ENCODE measurements at regions of chr6 and their contacts with region 1.

Region 1: DNA sequence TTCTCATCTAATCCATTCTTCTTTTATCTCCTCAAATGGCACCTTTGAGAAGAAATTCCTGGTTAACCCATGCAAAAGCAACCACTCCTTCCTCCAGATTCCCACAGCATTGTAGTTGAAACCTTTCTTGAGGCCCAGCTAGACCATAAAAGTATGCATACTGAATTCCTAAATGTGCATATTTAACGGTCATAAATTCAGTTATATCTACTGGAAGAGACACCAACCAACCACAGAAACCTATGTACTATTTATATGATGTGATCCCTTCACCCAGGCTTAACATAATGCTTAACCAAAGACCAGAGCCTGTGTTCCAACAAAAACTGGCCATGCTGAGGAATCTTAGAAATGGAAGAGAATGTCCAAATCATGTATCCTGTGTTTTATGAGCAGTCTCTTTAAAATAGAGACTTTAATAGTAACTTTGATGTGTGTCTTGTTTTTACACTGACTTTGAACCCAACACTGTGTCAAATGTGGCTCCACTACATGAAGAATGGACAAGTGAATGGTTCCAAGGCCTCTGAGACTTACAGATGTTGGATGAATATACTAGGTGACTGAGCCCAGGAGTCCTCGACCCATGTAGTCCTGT is 11.4 kb upstream of the TAF8 start:
- DNase-seq: no peak
- ATAC-seq: no peak
- H3K4me3 Mint-ChIP-seq: peak overlapping the region; percentile 88
- H3K27ac Mint-ChIP-seq: peak overlapping the region; percentile 100
- H3K4me1 Mint-ChIP-seq: peaks cover 78% of the 10 kb centered on the region
- H3K27me3 Mint-ChIP-seq: no peaks in the 10 kb centered on the region

Region 2: DNA sequence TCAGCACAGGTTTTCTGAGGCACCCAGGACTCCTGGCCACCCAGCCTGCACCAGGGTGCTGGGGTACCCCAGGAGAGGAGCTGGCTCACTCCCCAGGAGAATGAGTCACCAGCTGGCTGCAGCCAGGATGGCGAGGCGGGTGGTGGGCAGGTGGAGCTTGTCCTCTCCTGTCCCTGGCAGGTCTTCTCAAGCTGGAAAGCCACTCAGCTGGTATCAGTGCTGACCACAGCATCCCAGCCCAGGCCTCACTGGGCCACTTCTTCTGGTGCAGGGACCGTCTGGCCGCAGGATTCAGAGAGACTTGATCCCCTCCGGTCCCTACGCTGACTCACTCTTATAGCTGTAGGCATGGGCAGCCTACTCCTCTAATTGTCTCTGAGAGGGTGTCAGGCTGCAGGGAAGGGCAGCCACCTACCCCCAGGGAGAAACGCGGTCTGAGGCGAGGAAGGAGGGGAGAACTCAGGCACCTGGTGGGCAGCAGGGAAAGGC is 325.7 kb before region 1 on chr6:
- CTCF ChIA-PET with region 1: no interaction called
- POLR2A ChIA-PET with region 1: no interaction called
- intact Hi-C with region 1: no loop called
- DNase-seq: no peak
- ATAC-seq: peak; percentile 13
- H3K4me3 Mint-ChIP-seq: no peak overlapping the region
- H3K27ac Mint-ChIP-seq: no peak overlapping the region
- H3K4me1 Mint-ChIP-seq: peaks cover 24% of the 10 kb centered on the region
- H3K27me3 Mint-ChIP-seq: no peaks in the 10 kb centered on the region

Region 3: DNA sequence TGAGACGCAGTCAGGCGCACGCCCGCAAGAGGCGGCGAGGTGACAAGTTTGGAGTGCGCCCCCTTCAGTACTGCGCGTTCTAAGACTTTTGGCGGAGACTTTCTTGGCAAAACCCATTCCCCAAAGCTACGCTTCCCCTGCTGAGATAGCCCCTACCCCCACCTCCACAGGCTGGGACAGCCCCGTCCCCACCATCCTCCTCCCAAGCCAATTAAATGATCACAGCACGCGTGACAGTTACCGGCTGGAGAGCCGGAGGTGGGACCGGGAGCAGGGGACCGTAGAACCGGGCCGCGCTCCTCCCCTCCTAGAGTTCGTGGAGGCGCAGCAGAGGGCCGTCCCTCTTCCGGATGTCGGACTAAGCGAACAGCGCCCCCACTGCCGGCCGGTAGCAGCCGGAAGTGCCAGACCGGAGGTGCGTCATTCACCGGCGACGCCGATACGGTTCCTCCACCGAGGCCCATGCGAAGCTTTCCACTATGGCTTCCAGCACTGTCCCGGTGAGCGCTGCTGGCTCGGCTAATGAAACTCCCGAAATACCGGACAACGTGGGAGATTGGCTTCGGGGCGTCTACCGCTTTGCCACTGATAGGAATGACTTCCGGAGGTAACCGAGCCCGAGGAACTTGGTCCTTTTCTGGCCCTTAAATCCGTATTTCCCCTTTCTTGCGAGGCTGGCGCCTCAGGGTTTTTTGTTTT is 251.5 kb before region 1 on chr6 and contains the start of gene TOMM6:
- CTCF ChIA-PET with region 1: interaction called, 63 read pairs
- POLR2A ChIA-PET with region 1: interaction called, 3 read pairs
- intact Hi-C with region 1: loop called (anchors 1 kb)
- DNase-seq: peak; percentile 98
- ATAC-seq: peak; percentile 86
- H3K4me3 Mint-ChIP-seq: peak within 1 kb of the TSS; percentile 96
- H3K27ac Mint-ChIP-seq: peak within 1 kb of the TSS; percentile 98
- H3K4me1 Mint-ChIP-seq: peaks cover 19% of the 10 kb centered on the region
- H3K27me3 Mint-ChIP-seq: peaks cover 2% of the 10 kb centered on the region
- total RNA-seq, gene TOMM6: 282 to 345 TPM

Region 4: DNA sequence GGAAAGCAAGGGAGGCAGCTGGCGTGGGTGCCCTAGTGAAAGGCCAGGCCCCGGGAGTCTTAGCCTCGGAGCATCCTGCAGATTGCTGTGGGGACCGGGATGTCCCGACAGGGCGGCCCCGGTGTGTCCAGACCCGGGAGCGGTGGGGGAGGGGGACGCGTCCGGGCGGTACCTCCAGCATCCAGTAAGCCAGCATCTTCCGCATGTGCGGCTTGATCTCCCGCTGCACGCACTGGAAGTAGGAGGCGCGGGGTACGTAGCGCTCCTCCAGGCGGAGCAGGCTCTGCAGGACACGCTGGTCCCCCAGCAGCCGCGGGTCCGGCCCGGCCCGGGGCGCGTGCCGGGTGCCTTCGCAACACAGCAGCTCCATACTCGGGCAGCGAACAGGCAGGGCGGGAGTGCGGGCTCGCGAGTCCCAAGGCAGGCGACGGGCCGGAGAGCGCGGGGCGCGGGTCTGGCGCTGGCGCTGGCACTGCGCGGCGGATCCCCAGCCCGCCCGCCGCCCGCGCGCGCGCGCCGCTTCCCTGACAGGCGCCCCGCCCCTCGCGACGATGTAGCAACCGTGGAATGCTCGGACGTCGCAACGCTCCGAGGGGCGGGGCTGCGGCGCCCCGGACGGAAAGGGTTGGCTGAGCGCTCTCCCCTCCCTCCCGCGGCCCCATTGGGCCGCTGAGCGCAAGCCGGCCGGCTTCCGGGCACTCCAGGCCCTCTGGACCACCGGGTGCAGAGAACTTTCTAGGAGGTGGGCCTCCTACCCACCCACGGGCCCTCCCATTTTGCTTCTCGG is 97.4 kb before region 1 on chr6 and contains the start of gene CCND3:
- CTCF ChIA-PET with region 1: interaction called, 355 read pairs
- POLR2A ChIA-PET with region 1: interaction called, 28 read pairs
- intact Hi-C with region 1: loop called (anchors 1 kb)
- DNase-seq: peak; percentile 96
- ATAC-seq: peak; percentile 79
- H3K4me3 Mint-ChIP-seq: peak within 1 kb of the TSS; percentile 100
- H3K27ac Mint-ChIP-seq: peak within 1 kb of the TSS; percentile 96
- H3K4me1 Mint-ChIP-seq: peaks cover 63% of the 10 kb centered on the region
- H3K27me3 Mint-ChIP-seq: no peaks in the 10 kb centered on the region
- total RNA-seq, gene CCND3: 625 to 806 TPM

Region 5: DNA sequence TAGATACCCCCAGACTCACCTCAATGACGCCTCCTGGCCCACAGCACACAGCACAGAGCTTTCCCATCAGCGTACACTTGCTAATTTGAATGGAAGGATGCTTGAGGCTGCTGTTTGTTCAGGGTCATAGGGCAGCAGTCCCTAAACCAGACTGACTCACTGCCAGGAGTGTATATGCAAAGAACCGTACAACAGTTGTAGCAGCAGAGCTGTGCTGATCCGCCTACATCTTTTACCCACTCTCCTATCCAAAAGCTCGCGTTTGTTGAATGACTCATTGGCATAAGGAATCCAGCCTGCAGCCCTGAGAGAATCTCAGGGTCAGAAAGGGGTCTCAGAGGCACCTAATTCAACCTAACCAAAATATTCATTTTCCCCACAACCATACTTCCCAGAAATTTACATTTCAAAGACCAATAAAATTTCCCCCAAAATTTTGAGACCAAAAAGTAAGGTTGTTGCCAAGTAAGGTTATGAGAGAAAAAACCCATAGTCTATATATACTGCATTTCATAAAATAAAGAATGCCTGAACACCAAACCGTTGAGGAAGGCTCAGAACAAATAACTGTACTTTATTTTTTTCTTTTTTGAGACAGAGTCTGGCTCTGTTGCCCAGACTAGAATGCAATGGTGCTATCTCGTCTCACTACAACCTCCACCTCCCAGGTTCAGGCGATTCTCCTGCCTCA is 62.0 kb before region 1 on chr6:
- CTCF ChIA-PET with region 1: interaction called, 8 read pairs
- POLR2A ChIA-PET with region 1: interaction called, 4 read pairs
- intact Hi-C with region 1: loop called in 1 of 2 experiments (anchors 1 kb)
- DNase-seq: peak; percentile 66
- ATAC-seq: peak; percentile 94
- H3K4me3 Mint-ChIP-seq: peak overlapping the region; percentile 71
- H3K27ac Mint-ChIP-seq: peak overlapping the region; percentile 99
- H3K4me1 Mint-ChIP-seq: peaks cover 78% of the 10 kb centered on the region
- H3K27me3 Mint-ChIP-seq: no peaks in the 10 kb centered on the region

Region 6: DNA sequence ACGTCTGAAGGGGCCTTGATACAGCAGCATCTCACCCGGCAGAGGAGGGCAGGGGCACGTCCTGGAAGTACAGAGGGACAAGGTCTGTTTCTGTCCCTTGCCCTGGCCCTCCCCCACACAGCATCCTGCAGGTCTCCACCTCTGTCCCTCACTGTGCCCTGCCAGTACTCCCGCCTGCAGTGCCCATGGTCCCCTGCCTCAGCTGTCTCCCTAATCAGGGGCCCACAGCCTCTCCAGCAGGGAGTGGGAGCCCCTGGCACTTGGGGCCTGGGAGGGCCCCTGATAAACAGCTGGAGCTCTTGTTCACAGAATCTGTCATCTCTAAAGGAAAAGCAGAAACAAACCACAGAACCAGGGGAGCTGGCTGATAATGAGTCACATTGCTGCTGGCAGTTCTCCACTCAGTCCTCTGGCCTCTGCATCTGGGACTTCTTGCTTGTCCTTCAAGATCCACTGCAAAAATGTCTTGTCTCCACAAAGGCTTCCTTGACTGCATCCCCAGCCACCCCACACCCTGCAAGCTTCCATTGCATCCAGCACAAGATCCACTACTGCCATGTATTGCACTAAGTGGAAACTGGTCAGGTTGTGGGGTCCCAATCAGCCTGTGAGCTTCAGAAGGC is 21.8 kb before region 1 on chr6:
- CTCF ChIA-PET with region 1: interaction called, 11 read pairs
- POLR2A ChIA-PET with region 1: interaction called, 3 read pairs
- intact Hi-C with region 1: loop called (anchors 1 kb)
- DNase-seq: peak; percentile 72
- ATAC-seq: peak; percentile 68
- H3K4me3 Mint-ChIP-seq: peak overlapping the region; percentile 49
- H3K27ac Mint-ChIP-seq: peak overlapping the region; percentile 96
- H3K4me1 Mint-ChIP-seq: peaks cover 72% of the 10 kb centered on the region
- H3K27me3 Mint-ChIP-seq: no peaks in the 10 kb centered on the region

Measured in activated CD4-positive, alpha-beta T cell treated with anti-CD3 and anti-CD28 coated beads for 36 hours (primary cell).